ENCODE measurements at regions of chr19 and their contacts with region 1.

Region 1: DNA sequence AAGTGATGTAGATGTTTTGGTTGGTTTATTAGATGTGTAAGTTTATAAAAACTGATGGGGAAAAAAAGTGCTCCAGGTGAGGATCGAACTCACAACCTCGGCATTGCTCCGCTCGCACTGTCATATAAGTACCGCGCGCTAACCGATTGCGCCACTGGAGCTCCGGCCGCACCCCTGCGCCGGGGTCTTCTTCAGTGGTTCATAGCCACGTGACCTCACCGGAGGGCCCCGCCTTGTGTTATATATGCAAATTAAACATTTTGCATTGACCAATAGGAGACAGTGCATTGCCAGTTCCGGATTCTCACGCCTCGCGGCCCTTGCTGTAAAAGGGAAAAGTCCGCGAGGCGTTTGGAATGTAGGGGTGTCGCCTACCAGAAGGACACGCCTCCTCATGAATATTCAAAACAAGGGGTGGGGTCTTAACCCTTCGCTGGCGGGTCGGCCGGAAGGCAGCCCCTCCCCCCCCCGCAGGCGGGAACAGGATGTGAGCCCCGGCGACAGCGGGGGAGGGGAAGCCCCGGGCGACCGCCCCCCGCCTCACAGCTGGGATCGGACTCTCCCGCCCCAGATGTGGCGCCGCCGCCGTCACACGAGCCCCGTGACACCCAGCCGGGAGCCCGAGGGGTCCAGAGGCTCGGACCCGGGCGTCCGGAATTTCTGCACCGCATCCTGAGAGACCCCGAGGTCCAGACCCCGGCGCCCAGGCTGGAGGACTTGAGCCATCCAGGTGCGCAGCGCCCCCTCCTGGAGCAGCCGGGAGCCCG is at the start of gene PLEKHG2:
- DNase-seq: peak; percentile 98 to 99
- H3K4me3 ChIP-seq: peak within 1 kb of the TSS; percentile 98
- H3K4me1 ChIP-seq: peaks cover 32% of the 10 kb centered on the region
- H3K27me3 ChIP-seq: no peaks in the 10 kb centered on the region

Region 2: DNA sequence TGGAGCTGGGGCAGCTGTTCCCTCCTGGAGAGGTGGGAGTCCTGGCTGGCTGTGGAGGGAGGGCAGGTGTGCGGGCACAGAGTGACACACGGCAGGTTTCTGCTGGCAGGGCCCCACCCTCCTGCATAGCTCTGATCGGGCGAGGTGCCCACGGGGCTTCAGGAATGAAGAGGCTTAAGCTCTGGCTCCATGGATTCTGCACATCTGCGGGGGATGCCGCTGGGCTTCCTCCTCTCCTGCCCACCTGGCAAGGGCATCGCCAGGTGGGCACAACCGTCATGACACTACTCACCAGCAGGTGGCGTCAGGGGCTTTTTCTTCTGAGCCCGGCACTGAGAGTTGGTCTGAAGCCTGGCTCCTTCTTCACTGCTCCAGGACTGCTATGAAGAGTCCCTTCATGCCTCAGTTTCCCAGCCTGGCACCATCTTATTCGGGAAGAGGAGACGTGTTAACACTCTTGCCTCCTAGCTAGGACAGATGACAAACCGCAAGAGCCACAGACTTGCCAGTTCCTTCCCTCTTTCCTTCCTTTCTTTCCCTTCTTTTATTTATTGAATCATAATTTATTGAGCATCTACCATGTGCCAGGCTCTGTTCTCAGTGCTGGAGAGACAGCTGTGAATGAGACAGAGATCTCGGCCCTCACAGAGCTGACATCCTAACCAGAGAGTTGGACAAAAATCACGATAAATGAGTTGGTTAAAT is 301.9 kb before region 1 on chr19:
- in situ Hi-C with region 1: loop called (anchors 10 kb)
- DNase-seq: peak; percentile 47 to 84
- H3K4me3 ChIP-seq: no peak overlapping the region
- H3K4me1 ChIP-seq: no peaks in the 10 kb centered on the region
- H3K27me3 ChIP-seq: no peaks in the 10 kb centered on the region

Region 3: GRCh38 chr19:39532233-39533002 is 120.1 kb after region 1 on chr19 and contains the start of gene EID2B:
- in situ Hi-C with region 1: no loop called
- DNase-seq: peak; percentile 95
- H3K4me3 ChIP-seq: peak within 1 kb of the TSS; percentile 87
- H3K4me1 ChIP-seq: peaks cover 14% of the 10 kb centered on the region
- H3K27me3 ChIP-seq: no peaks in the 10 kb centered on the region

Measured in HAP-1 (cell line).